ENCODE measurements at regions of chr2 and their contacts with region 1.

Region 1: GRCh38 chr2:100262555-100263320 is 59.6 kb downstream of the LONRF2 start:
- DNase-seq: no peak
- ATAC-seq: peak; percentile 80
- H3K4me3 ChIP-seq: no peak overlapping the region
- H3K27ac ChIP-seq: no peak overlapping the region
- H3K4me1 ChIP-seq: no peaks in the 10 kb centered on the region
- H3K27me3 ChIP-seq: no peaks in the 10 kb centered on the region; a peak in 1 of 4 replicates
- CTCF ChIP-seq: peak; percentile 88 to 98 (median 91)
- EP300 ChIP-seq: no peak
- POLR2A ChIP-seq: no peak
- RAD21 ChIP-seq: peak; percentile 93

Region 2: GRCh38 chr2:100242891-100243619 is 19.7 kb before region 1 on chr2:
- CTCF ChIA-PET with region 1: interaction called, 10 read pairs
- POLR2A ChIA-PET with region 1: no interaction called
- RAD21 ChIA-PET with region 1: no interaction called
- SMC1A ChIA-PET with region 1: no interaction called
- in situ Hi-C with region 1: no loop called
- intact Hi-C with region 1: loop called (anchors 1 kb)
- DNase-seq: no peak
- ATAC-seq: peak; percentile 82
- H3K4me3 ChIP-seq: no peak overlapping the region
- H3K27ac ChIP-seq: no peak overlapping the region
- H3K4me1 ChIP-seq: peaks cover 18% of the 10 kb centered on the region
- H3K27me3 ChIP-seq: 0 out of 4 replicates have a peak, but pooled peaks cover 2 to 5% of the 10 kb centered on the region in 2 experiments
- CTCF ChIP-seq: peak; percentile 77 to 81 (median 77)
- EP300 ChIP-seq: no peak
- POLR2A ChIP-seq: no peak
- RAD21 ChIP-seq: peak; percentile 91

Region 3: DNA sequence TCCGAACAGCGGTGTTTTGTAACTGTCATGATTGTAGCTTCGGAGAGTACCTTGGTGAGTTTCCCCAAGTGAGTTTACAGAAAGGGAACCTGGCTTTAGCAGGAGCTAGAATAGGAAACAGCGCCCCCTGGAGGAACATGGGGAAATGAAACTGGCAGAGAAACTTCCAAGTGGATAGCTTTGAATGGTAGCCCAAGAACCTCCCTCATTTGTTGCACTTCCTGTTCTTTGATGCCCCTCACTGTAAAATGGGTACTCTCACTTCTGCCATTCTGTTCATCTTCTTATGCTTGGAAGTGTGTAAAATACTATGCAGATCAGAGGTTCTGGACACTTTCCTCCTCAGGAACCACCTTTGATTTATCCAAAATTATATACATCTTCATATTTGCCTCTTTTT is 118.5 kb after region 1 on chr2:
- CTCF ChIA-PET with region 1: interaction called, 156 read pairs
- POLR2A ChIA-PET with region 1: no interaction called
- RAD21 ChIA-PET with region 1: interaction called, 75 read pairs
- SMC1A ChIA-PET with region 1: interaction called, 89 read pairs
- in situ Hi-C with region 1: loop called (anchors 5 kb)
- intact Hi-C with region 1: loop called (anchors 1 kb)
- DNase-seq: peak; percentile 60
- ATAC-seq: peak; percentile 97
- H3K4me3 ChIP-seq: no peak overlapping the region
- H3K27ac ChIP-seq: no peak overlapping the region
- H3K4me1 ChIP-seq: no peaks in the 10 kb centered on the region; the same call in 1 of the 2 replicates
- H3K27me3 ChIP-seq: no peaks in the 10 kb centered on the region; a peak in 1 of 4 replicates
- CTCF ChIP-seq: peak; percentile 85 to 90 (median 89)
- EP300 ChIP-seq: no peak
- POLR2A ChIP-seq: no peak
- RAD21 ChIP-seq: peak; percentile 85

Region 4: DNA sequence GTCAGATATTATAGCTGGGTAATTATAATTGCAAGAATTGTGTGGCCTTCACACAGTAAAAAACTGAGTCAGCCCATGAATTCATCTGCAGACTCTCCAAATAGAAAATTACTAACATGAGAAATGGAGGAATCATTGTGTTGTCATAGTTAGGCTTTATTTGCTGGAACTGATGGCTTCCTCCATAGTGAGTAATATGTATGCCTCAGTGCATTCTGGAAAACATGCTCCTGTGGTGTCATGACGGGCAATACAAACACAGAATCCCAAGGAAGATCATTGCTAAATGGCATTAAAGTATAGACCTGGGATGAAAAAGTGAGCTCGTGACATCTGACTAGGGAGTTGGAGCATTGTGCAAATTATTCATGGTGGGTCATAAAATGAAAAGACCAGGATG is 184.0 kb after region 1 on chr2:
- CTCF ChIA-PET with region 1: no interaction called
- POLR2A ChIA-PET with region 1: no interaction called
- RAD21 ChIA-PET with region 1: interaction called, 7 read pairs
- SMC1A ChIA-PET with region 1: interaction called, 3 read pairs
- in situ Hi-C with region 1: no loop called
- intact Hi-C with region 1: loop called (anchors 5 kb)
- DNase-seq: no peak
- ATAC-seq: no peak
- H3K4me3 ChIP-seq: no peak overlapping the region
- H3K27ac ChIP-seq: no peak overlapping the region
- H3K4me1 ChIP-seq: no peaks in the 10 kb centered on the region
- H3K27me3 ChIP-seq: no peaks in the 10 kb centered on the region
- CTCF ChIP-seq: no peak
- EP300 ChIP-seq: no peak
- POLR2A ChIP-seq: no peak
- RAD21 ChIP-seq: no peak

Region 5: DNA sequence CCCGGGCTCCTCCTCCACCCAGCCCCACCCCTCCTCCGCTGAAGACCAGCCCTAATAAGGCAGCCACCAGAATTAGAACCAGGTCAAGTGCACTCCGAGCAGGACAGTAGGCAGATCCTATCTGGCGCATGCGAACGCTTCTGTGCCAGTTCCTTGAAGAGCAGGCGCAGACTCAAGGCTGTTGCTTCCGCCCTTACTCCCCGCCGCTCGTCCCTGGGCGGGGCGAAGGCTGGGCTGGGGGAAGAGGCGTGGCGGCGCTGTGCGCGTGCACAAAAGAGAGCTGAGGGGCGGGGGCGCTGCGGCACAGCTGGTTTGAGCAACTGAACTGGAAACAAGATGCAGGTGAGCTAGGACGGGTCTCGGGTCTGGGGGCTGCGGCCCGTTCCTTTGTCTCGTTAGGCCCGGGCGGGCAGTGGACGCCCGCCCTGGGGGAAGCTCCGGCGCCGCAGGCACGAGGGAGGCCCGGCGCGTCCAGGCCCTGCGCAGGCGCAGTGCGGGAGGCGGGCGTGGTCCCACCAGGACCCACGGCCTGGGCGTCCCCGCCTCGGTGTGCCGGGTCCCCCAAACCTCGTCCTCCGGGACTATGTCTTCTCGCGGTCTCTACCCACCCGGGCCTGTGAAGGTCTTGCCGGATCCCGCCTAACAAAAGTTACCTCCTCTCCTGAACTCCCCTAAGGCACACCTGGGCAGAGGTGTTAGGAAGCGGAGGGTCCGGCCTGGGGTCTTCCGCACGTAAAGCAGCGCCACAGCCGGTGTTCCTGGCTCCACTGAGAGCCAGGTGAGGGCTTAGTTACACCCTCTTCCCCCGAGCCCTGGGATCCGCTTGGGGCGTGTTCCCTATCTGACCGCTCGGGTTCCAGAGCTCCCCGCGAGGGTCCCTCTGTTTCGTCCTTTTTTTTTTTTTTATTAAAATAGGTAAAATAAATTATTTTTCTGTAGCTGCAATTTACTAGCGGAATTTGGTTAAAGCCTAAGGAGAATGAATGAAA is 300.3 kb after region 1 on chr2 and contains the start of gene PDCL3:
- CTCF ChIA-PET with region 1: interaction called, 4 read pairs
- POLR2A ChIA-PET with region 1: no interaction called
- RAD21 ChIA-PET with region 1: no interaction called
- SMC1A ChIA-PET with region 1: no interaction called
- in situ Hi-C with region 1: no loop called
- intact Hi-C with region 1: loop called (anchors 5 kb)
- DNase-seq: peak; percentile 98
- ATAC-seq: peak; percentile 97
- H3K4me3 ChIP-seq: peak within 1 kb of the TSS; percentile 88
- H3K27ac ChIP-seq: peak within 1 kb of the TSS; percentile 92
- H3K4me1 ChIP-seq: peaks cover 4% of the 10 kb centered on the region
- H3K27me3 ChIP-seq: no peaks in the 10 kb centered on the region
- CTCF ChIP-seq: peak in 2 of 3 experiments; percentile 12 to 20; a peak in 2 of 6 replicates
- EP300 ChIP-seq: no peak
- POLR2A ChIP-seq: peak; percentile 81
- RAD21 ChIP-seq: no peak
- polyA plus RNA-seq, gene PDCL3: 109 to 111 TPM

Region 6: GRCh38 chr2:100984892-100985379 is 722.2 kb after region 1 on chr2:
- CTCF ChIA-PET with region 1: interaction called, 6 read pairs
- POLR2A ChIA-PET with region 1: no interaction called
- RAD21 ChIA-PET with region 1: interaction called, 3 read pairs
- SMC1A ChIA-PET with region 1: no interaction called
- in situ Hi-C with region 1: loop called (anchors 10 kb)
- intact Hi-C with region 1: loop called (anchors 5 kb)
- DNase-seq: no peak
- ATAC-seq: peak; percentile 93
- H3K4me3 ChIP-seq: no peak overlapping the region
- H3K27ac ChIP-seq: no peak overlapping the region
- H3K4me1 ChIP-seq: no peaks in the 10 kb centered on the region
- H3K27me3 ChIP-seq: no peaks in the 10 kb centered on the region; a peak in 1 of 4 replicates
- CTCF ChIP-seq: peak; percentile 85 to 91 (median 89)
- EP300 ChIP-seq: no peak
- POLR2A ChIP-seq: no peak
- RAD21 ChIP-seq: peak; percentile 89

Measured in GM12878 (cell line).